GM12878 (cell line): ENCODE measurements at regions of chr20 and their contacts with region 1.

Region 1: DNA sequence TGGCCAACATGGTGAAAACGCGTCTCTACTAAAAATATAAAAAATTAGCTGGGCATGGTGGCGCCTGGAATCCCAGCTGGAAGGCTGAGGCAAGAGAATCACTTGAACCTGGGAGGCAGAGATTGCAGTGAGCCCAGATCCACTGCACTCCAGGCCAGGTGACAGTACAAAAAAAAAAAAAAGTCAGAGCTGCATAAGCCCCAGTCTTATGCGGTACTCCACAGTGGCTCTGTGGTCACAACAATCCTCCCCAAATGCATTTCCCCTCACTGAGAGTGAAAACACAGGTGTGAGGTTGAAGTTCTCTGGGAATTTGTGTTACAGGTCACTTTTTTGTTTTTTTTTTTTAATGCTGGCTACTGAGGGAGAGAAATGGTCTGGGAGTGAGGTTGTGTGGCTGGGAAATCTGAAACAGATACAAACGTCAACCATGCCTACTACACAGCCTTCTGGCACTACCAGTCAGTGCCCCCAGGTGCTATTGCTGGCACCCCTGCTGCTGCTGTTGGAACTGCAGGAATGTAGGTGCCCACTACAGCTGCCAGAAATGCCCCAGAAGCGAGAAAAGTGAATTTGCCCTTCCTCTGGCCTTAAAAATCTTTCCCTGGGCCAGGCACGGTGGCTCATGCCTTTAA is 5.7 kb downstream of the MRPS26 start:
- DNase-seq: no peak
- ATAC-seq: peak; percentile 32; the same call in 1 of the 3 replicates
- H3K4me3 ChIP-seq: no peak overlapping the region
- H3K27ac ChIP-seq: no peak overlapping the region
- H3K4me1 ChIP-seq: no peaks in the 10 kb centered on the region
- H3K27me3 ChIP-seq: no peaks in the 10 kb centered on the region
- CTCF ChIP-seq: no peak
- EP300 ChIP-seq: no peak
- POLR2A ChIP-seq: no peak
- RAD21 ChIP-seq: no peak

Region 2: GRCh38 chr20:3032624-3033023 is 18.9 kb before region 1 on chr20:
- CTCF ChIA-PET with region 1: no interaction called
- POLR2A ChIA-PET with region 1: no interaction called
- RAD21 ChIA-PET with region 1: no interaction called
- SMC1A ChIA-PET with region 1: no interaction called
- in situ Hi-C with region 1: no loop called
- intact Hi-C with region 1: no loop called
- DNase-seq: no peak
- ATAC-seq: no peak
- H3K4me3 ChIP-seq: no peak overlapping the region
- H3K27ac ChIP-seq: no peak overlapping the region
- H3K4me1 ChIP-seq: no peaks in the 10 kb centered on the region
- H3K27me3 ChIP-seq: no peaks in the 10 kb centered on the region
- CTCF ChIP-seq: no peak
- EP300 ChIP-seq: no peak
- POLR2A ChIP-seq: no peak
- RAD21 ChIP-seq: no peak

Region 3: GRCh38 chr20:3068986-3069900 is 17.7 kb after region 1 on chr20:
- CTCF ChIA-PET with region 1: interaction called, 11 read pairs
- POLR2A ChIA-PET with region 1: no interaction called
- RAD21 ChIA-PET with region 1: interaction called, 3 read pairs
- SMC1A ChIA-PET with region 1: no interaction called
- in situ Hi-C with region 1: no loop called
- intact Hi-C with region 1: no loop called
- DNase-seq: no peak
- ATAC-seq: peak; percentile 52
- H3K4me3 ChIP-seq: no peak overlapping the region
- H3K27ac ChIP-seq: no peak overlapping the region
- H3K4me1 ChIP-seq: peaks cover 14% of the 10 kb centered on the region
- H3K27me3 ChIP-seq: peaks cover 0 to 2% of the 10 kb centered on the region in 2 experiments; a peak in 3 of 4 replicates
- CTCF ChIP-seq: peak; percentile 19 to 27 (median 19); a peak in 2 of 6 replicates
- EP300 ChIP-seq: no peak
- POLR2A ChIP-seq: no peak
- RAD21 ChIP-seq: peak; percentile 31; the same call in 1 of the 2 replicates

Region 4: DNA sequence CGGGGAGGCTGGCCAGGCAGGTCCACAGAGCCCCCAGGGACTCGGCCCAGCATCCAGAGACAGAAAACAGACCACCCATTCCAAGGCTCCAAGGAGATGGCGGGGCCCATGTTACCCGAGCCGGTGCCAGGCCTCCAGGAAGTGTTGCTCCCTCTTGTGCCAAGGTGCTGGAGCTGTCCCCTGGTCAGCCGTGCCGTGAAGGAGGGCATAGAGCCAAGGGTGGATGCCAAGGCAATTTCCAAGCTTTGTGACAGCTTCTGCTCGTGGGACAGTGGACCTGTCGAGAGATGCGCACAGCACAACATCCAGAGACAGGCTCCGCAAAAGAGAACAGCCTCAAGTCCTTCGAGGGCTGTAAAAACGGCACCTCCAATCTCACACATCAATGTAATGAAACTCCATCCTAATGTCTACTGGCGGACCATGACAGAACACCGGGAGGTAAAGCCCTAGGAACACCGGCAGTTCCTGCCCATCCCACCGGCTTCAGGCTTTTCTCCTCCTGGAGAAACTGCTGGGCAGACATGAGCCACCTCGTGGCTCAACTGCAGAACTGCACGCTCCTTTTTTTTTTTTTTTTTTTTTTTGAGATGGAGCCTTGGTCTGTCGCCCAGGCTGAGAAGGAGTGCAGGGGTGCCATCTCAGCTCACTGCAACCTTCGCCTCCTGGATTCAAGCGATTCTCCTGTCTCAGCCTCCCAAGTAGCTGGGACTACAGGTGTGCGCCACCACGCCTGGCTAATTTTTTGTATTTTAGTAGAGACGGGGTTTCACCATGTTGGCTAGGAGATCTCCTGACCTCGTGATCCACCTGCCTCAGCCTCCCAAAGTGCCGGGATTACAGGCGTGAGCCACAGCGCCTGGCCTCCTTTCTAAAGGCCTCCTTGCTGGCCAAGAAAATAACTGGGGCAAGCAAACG is 63.9 kb after region 1 on chr20:
- CTCF ChIA-PET with region 1: interaction called, 15 read pairs
- POLR2A ChIA-PET with region 1: no interaction called
- RAD21 ChIA-PET with region 1: interaction called, 4 read pairs
- SMC1A ChIA-PET with region 1: interaction called, 5 read pairs
- in situ Hi-C with region 1: no loop called
- intact Hi-C with region 1: loop called (anchors 1 kb)
- DNase-seq: peak; percentile 2
- ATAC-seq: peak; percentile 71
- H3K4me3 ChIP-seq: no peak overlapping the region
- H3K27ac ChIP-seq: no peak overlapping the region
- H3K4me1 ChIP-seq: no peaks in the 10 kb centered on the region
- H3K27me3 ChIP-seq: no peaks in the 10 kb centered on the region
- CTCF ChIP-seq: peak; percentile 67 to 74 (median 70)
- EP300 ChIP-seq: no peak
- POLR2A ChIP-seq: no peak
- RAD21 ChIP-seq: peak; percentile 65

Region 5: GRCh38 chr20:3312940-3313682 is 261.6 kb after region 1 on chr20:
- CTCF ChIA-PET with region 1: interaction called, 44 read pairs
- POLR2A ChIA-PET with region 1: no interaction called
- RAD21 ChIA-PET with region 1: interaction called, 16 read pairs
- SMC1A ChIA-PET with region 1: interaction called, 16 read pairs
- in situ Hi-C with region 1: loop called (anchors 5 kb)
- intact Hi-C with region 1: loop called (anchors 5 kb)
- DNase-seq: no peak
- ATAC-seq: no peak
- H3K4me3 ChIP-seq: no peak overlapping the region
- H3K27ac ChIP-seq: no peak overlapping the region
- H3K4me1 ChIP-seq: no peaks in the 10 kb centered on the region
- H3K27me3 ChIP-seq: no peaks in the 10 kb centered on the region
- CTCF ChIP-seq: no peak
- EP300 ChIP-seq: no peak
- POLR2A ChIP-seq: no peak
- RAD21 ChIP-seq: no peak